ENCODE measurements at regions of chr10 and their contacts with region 1.

Region 1: DNA sequence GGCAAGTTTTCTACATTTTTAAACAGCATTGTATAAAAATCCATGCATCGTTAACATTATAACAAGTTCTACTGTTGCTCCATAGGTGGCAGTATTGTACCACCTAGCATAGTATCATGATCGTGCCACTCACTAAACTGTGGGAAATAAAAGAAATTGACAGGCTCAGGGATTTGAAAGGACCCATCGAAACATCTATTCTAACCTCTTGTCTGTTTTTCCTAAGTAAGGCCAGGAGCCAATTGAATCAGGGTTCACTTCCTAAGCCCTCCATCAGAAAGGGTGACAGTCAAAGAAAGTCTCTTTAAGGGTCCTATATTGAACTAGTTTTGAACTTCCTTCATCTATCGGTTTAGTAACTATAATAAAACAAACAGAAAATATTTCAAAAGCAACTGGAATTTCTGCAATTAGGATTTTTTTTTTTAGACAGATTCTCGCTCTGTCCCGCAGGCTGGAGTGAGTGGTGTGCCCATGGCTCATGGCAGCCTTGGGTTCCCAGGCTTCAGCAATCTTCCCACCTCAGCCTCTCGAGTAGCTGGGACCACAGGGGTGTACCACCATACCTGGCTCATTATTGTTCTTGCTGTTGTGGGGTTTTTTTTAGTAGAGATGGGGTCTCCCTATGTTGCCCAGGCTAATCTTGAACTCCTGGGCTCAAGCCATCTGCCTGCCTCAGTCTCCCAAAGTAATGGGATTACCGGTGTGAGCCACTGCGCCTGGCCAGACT is 9.4 kb downstream of the HACD1 start:
- DNase-seq: no peak
- H3K4me3 ChIP-seq: no peak overlapping the region
- H3K27ac ChIP-seq: no peak overlapping the region
- H3K4me1 ChIP-seq: no peaks in the 10 kb centered on the region
- H3K27me3 ChIP-seq: no peaks in the 10 kb centered on the region
- CTCF ChIP-seq: peak; percentile 54 to 87 (median 84)
- POLR2A ChIP-seq: no peak

Region 2: DNA sequence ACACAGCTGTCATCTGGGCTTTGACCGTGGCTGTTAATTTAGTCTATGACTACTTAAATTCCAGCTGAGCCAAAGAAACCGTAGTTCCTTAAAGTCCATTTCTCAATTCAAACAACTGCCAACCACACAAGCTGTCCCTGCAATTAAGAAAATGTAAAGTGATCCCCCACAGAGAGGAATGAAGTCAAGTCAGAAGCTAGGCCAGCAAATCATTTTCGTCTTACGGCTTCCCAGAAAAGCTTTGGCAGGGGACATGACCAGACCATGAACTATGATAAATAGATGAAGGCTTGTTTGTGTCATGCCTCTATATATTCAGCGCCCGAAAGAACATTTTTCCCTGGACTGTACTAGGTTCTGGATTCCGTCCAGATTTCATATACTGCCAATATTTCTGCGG is 45.2 kb before region 1 on chr10:
- intact Hi-C with region 1: no loop called
- DNase-seq: no peak
- H3K4me3 ChIP-seq: no peak overlapping the region
- H3K27ac ChIP-seq: no peak overlapping the region
- H3K4me1 ChIP-seq: no peaks in the 10 kb centered on the region
- H3K27me3 ChIP-seq: no peaks in the 10 kb centered on the region
- CTCF ChIP-seq: no peak
- POLR2A ChIP-seq: no peak

Region 3: DNA sequence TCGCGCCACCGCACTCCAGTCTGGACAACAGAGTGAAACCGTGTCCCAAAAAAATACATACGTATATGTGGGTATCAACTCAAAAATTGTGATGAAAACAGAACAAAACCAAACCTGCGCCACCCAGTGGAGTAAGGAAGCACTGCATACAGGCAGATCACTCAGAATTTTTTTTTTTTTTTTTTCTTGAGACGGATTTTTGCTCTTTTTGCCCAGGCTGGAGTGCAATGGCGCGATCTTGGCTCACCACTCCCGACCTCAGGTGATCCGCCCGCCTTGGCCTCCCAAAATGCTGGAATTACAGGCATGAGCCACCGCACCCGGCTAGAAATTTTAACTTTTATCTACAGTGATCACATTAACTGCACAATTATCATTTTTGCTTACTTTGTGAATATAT is 135.2 kb after region 1 on chr10:
- intact Hi-C with region 1: loop called (anchors 5 kb)
- DNase-seq: peak in 1 of 2 donors; percentile 20
- H3K4me3 ChIP-seq: no peak overlapping the region
- H3K27ac ChIP-seq: no peak overlapping the region
- H3K4me1 ChIP-seq: peaks cover 7% of the 10 kb centered on the region
- H3K27me3 ChIP-seq: no peaks in the 10 kb centered on the region
- CTCF ChIP-seq: peak; percentile 46 to 85 (median 62)
- POLR2A ChIP-seq: no peak